ENCODE measurements at regions of chr4 and their contacts with region 1.

Region 1: DNA sequence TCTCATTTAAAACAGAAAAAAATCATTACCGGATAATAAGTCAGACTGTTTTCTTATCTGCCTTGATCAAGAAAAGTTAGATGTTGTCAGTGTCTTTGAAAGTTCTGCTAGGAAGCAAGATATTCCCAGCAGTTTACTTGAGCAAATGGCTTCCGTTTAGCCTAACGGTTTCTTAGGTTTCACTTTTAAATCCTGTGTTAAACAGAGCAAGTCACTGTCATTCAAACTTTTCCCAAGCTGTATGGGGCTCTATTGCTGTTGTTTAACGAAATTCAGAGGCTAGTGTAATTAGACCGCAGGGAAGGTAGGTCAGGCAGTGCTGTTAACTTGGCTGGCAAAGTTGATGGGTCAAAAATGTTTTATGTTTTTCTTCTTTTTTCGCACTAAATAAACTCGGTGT is 80.3 kb upstream of the NEIL3 start:
- DNase-seq: no peak
- ATAC-seq: no peak
- H3K4me3 Mint-ChIP-seq: peak overlapping the region; percentile 36
- H3K27ac Mint-ChIP-seq: no peak overlapping the region
- H3K4me1 Mint-ChIP-seq: peaks cover 8% of the 10 kb centered on the region
- H3K27me3 Mint-ChIP-seq: no peaks in the 10 kb centered on the region

Region 2: GRCh38 chr4:176988226-176988625 is 241.1 kb before region 1 on chr4:
- CTCF ChIA-PET with region 1: no interaction called
- POLR2A ChIA-PET with region 1: no interaction called
- intact Hi-C with region 1: no loop called
- DNase-seq: no peak
- ATAC-seq: no peak
- H3K4me3 Mint-ChIP-seq: no peak overlapping the region
- H3K27ac Mint-ChIP-seq: no peak overlapping the region
- H3K4me1 Mint-ChIP-seq: no peaks in the 10 kb centered on the region
- H3K27me3 Mint-ChIP-seq: no peaks in the 10 kb centered on the region

Region 3: DNA sequence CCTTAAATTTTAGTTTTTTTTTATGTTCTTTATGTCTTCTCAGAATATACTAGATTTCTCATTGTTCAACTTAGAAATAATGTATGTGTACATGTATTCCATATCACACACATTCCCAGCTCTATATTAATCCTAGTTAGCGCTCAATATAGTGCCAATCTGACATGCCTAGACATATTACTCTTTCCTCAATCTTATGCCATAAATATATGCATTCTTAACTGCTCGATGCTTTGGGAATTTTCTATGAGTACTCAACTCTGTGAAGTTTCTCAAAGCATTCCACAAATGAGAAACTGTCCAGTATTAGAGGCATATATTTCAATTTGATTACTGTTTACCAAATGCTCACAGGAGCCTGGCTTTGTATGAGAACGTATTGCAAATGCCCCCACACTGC is 205.4 kb before region 1 on chr4:
- CTCF ChIA-PET with region 1: no interaction called
- POLR2A ChIA-PET with region 1: no interaction called
- intact Hi-C with region 1: no loop called
- DNase-seq: no peak
- ATAC-seq: no peak
- H3K4me3 Mint-ChIP-seq: no peak overlapping the region
- H3K27ac Mint-ChIP-seq: no peak overlapping the region
- H3K4me1 Mint-ChIP-seq: no peaks in the 10 kb centered on the region
- H3K27me3 Mint-ChIP-seq: no peaks in the 10 kb centered on the region

Region 4: GRCh38 chr4:178081896-178082295 is 852.6 kb after region 1 on chr4:
- CTCF ChIA-PET with region 1: no interaction called
- POLR2A ChIA-PET with region 1: interaction called, 11 read pairs
- intact Hi-C with region 1: no loop called
- DNase-seq: no peak
- ATAC-seq: no peak
- H3K4me3 Mint-ChIP-seq: no peak overlapping the region
- H3K27ac Mint-ChIP-seq: no peak overlapping the region
- H3K4me1 Mint-ChIP-seq: no peaks in the 10 kb centered on the region
- H3K27me3 Mint-ChIP-seq: no peaks in the 10 kb centered on the region